ENCODE measurements at regions of chr10 and their contacts with region 1.

Region 1: GRCh38 chr10:13787015-13787421 is 200.3 kb downstream of the PRPF18 start:
- DNase-seq: peak; percentile 82
- H3K4me3 ChIP-seq: peak overlapping the region in 5 of 8 donors; percentile 6 to 53 (median 17)
- H3K27ac ChIP-seq: peak overlapping the region; percentile 49 to 85 (median 77)
- H3K4me1 ChIP-seq: peaks cover 17 to 78% (median 50%) of the 10 kb centered on the region in 6 donors
- H3K27me3 ChIP-seq: no peaks in the 10 kb centered on the region
- CTCF ChIP-seq: no peak
- POLR2A ChIP-seq: no peak

Region 2: GRCh38 chr10:13882112-13882711 is 95.2 kb after region 1 on chr10:
- intact Hi-C with region 1: no loop called
- DNase-seq: no peak
- H3K4me3 ChIP-seq: no peak overlapping the region
- H3K27ac ChIP-seq: peak overlapping the region in 5 of 8 donors; percentile 4 to 49 (median 14)
- H3K4me1 ChIP-seq: peaks cover 0 to 24% (median 7%) of the 10 kb centered on the region in 6 donors
- H3K27me3 ChIP-seq: peaks cover 0 to 4% (median 0%) of the 10 kb centered on the region in 7 donors
- CTCF ChIP-seq: no peak
- POLR2A ChIP-seq: no peak

Region 3: DNA sequence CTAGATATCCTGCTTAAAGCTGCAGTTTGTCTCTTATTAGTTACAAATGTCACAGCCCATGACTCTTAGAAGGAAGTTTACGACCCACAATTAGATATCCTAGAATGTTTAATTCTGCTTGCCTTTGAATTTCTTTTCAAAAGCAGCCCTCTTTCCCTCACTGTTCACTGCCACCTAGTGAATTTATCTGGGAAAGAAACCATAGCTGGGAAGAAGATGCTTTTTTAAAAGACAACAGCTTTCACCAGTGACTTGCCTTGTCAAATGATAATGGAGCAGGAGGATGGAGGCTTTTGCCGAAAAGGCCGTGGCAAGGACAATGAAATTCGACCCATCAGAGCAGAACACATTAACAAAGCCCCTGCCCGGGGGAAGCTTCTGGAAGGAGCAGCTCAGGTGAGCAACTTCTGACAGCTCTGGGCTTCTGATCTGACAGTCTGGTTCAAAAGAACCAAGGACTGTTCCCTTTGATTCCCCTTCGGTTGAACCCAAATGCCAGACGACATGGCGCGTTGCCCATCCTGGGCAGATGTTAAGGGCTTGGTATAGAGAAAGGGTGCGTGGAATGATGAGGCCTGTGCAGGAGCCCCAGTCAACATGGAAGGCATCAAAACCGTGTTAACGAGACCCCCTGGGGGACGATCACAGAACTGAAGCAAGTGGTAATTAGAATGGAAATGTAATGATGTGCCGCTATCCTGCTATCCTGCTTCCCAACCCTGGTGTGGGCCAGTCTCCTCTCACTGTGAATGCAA is 306.9 kb after region 1 on chr10:
- intact Hi-C with region 1: loop called (anchors 10 kb)
- DNase-seq: no peak
- H3K4me3 ChIP-seq: no peak overlapping the region
- H3K27ac ChIP-seq: no peak overlapping the region
- H3K4me1 ChIP-seq: no peaks in the 10 kb centered on the region
- H3K27me3 ChIP-seq: no peaks in the 10 kb centered on the region
- CTCF ChIP-seq: peak in 6 of 11 experiments; percentile 11 to 44 (median 26)
- POLR2A ChIP-seq: no peak

Region 4: DNA sequence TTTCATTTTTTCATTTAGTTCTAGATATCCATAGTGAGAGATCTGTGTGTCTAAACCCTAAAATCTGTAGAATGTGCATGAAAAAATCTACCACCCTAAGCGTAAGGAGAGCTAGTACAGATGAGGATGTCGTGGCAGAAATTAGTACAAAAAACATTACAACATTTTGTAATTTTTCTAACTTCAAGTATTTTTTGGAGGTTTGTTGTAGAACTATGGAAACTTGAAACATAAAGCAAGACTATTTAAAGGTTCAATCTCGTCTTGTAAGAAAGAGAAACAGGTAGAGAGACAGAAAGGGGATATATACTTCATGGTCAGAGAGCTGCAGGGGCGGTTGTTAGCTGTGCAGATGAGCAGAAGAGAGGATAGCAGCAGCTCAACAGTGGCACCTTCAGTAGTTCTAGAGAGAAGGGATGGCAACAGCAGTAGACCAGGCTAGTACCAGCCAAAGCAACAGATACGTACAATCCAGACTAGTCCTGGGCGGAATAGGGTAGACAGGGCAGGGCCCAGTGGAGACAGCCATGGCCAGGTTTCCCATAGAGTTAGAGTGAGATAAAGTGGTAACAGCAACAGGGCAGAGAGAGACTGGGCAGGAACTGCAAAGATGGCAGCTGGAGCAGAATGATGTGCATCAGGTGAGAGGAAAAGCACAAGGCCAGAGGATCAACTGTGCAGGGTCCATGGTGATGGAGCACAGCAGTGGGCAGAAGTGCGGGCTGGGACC is 398.5 kb after region 1 on chr10:
- intact Hi-C with region 1: loop called (anchors 10 kb)
- DNase-seq: no peak
- H3K4me3 ChIP-seq: peak overlapping the region in 2 of 8 donors; percentile 3 to 49
- H3K27ac ChIP-seq: peak overlapping the region in 7 of 8 donors; percentile 16 to 75 (median 41)
- H3K4me1 ChIP-seq: peaks cover 0 to 34% (median 4%) of the 10 kb centered on the region in 6 donors
- H3K27me3 ChIP-seq: peaks cover 0 to 26% (median 12%) of the 10 kb centered on the region in 7 donors
- CTCF ChIP-seq: no peak
- POLR2A ChIP-seq: no peak